GM13977 (cell line): ENCODE measurements at regions of chr9 and their contacts with region 1.

Region 1: DNA sequence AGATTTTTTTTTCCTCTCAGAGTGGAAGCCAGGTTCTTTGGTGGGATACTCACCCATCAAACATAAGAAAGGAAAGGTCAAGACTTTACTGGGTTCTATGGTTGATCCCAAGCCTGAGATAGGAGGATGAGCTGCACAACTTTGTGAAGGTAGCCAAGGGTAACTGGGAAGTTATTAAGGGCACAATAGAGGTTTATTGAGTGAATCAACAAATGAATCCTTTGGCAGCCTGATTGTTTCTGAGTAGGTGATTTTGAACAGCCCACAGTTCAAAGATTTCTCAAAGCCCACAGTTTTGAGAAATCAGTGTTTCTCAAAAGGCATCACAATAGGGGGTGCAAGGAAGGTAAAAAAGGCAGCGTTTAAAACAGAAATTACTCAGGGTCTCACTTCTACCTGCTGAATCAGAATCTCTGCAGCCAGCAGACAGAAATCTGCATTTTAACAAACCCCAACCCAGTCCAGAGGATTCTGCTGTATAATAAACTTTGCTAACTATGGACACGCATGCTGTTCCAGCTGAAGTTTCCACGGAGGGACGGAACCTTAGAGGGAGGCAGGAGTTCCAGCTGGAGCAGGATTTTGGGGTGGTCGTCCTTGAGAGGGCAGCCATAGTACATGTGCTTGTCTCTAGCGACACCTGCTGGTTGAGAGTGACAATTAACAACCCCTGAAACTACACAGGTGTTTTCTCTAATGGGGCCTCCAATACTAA is 32.7 kb upstream of the FSD1L start:
- DNase-seq: peak; percentile 67
- CTCF ChIP-seq: peak; percentile 83

Region 2: GRCh38 chr9:104774831-104775573 is 640.1 kb before region 1 on chr9:
- in situ Hi-C with region 1: loop called (anchors 10 kb)
- DNase-seq: peak; percentile 51
- CTCF ChIP-seq: no peak

Region 3: DNA sequence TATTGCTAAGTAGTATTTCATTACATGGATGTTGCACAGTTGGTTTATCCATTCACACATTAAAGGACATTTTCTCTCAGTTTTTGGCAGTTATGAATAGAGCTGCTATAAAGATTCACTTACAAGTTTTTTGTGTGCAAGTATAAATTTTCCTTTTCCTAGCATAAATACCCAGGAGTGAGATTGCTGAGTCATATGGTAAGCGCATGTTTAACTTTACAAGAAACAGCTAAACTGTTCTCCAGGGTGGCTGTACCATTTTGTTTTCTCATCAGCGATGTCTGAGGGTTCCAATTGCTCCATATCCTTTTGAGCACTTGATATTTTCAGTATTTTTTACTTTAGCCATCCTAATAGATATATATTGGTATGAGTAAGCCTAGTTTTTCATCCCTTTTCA is 470.7 kb before region 1 on chr9:
- in situ Hi-C with region 1: no loop called
- DNase-seq: no peak
- CTCF ChIP-seq: no peak

Region 4: GRCh38 chr9:105046907-105047741 is 368.0 kb before region 1 on chr9:
- in situ Hi-C with region 1: no loop called
- DNase-seq: no peak
- CTCF ChIP-seq: no peak

Region 5: DNA sequence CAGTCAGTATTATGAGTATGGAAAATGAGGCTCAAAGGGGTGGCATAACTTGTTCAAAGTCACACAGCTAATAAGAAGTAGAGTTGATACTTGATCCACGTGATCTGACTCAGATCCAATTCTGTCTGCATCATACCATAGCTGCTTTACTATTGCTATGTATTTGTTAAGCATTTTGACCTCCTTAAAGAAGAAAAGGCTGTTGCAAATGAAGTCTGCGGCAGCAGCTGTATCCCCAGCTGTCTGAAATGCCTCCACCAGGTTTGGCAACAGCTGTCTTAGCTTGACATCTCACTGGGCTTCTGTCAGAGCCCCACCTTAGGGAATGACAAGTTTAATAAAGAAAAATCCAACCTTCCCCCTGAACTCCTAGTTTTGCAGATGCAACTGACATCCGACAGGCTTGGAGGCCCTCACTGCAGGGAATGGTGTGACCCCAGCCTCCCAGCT is 246.2 kb before region 1 on chr9:
- in situ Hi-C with region 1: loop called (anchors 10 kb)
- DNase-seq: no peak
- CTCF ChIP-seq: no peak